Right ventricle myocardium inferior (tissue), 1 donor: ENCODE measurements at regions of chr2 and their contacts with region 1.

Region 1: GRCh38 chr2:204691911-204692510 is 146.7 kb downstream of the PARD3B start:
- DNase-seq: no peak
- ATAC-seq: peak; percentile 70

Region 2: GRCh38 chr2:204260162-204260877 is 431.7 kb before region 1 on chr2:
- intact Hi-C with region 1: loop called (anchors 5 kb)
- DNase-seq: no peak
- ATAC-seq: peak; percentile 64

Region 3: DNA sequence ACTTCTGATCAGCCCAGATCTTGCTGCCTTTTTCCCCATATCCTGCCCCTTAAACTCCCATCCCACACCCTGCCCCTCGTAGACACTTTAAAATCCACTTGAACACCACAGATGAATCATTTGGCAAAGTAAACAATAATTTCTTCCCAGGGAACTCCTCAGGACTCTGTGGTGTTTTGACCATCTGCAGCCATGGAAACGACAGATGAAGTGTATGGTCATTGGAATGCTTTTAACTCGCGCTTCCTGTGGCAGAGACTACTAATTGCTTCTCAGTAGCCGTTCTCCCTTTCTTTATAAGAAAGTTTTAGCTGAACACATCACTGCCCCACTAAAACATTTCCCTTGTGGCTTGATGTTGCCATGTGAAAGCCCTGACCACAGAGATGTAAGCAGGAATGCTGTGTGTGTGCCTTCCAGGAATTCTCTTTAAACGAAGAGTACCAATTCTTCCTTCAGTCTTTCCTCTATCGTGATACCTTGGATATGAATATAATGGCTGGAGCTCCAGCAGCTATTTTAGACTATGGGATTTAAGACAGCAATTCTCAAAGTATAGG is 239.5 kb before region 1 on chr2:
- intact Hi-C with region 1: loop called (anchors 10 kb)
- DNase-seq: no peak
- ATAC-seq: peak; percentile 79

Region 4: GRCh38 chr2:205297846-205298245 is 605.8 kb after region 1 on chr2:
- intact Hi-C with region 1: no loop called
- DNase-seq: no peak
- ATAC-seq: no peak